Activated CD4-positive, alpha-beta T cell treated with anti-CD3 and anti-CD28 coated beads, Interleukin-2, amount 10 ng/mL, durations not matched to agents 24 days and 14 days (primary cell): ENCODE measurements at regions of chr19 and their contacts with region 1.

Region 1: DNA sequence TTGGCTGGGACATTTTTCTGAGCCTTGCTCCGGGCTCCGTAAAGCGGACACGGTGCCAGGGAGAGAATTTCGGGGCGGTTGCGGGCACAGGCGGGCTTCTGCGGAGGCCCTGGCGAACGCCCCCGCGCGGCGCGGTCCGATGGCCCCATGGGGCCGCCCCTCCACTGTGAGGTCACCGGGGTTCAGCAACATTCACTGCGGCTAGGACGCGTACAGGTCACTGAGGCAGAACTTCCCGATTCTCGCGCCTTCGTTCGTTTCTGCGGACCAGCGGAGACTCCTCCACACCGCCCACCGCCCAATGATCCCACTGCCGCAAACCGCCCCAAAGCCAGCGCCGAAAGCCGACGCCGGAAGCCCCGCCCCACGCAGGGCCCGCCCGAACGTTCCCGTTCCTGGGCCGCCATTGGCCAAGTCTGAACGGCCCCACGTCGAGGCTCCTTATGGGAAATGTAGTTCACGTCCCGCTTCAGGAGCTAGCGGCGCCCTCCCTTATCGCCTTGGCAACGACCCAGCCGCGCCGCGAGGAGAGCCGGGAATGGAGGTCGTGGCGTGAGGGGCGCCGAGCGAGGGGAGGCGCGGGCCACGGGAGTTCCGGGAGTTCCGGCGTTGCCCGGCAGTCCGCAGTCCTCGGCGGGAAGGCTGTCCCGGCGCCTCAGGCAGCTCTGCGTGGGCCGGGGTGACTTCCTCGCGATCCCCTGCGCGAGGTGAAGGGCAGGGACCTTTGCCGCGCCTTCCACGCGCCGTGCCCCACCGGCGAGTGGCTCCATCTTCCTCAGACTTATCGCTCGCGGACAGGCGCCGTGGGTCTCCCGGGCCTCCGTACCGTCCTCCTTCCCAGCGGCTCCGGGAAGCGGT is at the start of gene ZNF584:
- DNase-seq: peak; percentile 98
- H3K4me3 Mint-ChIP-seq: peak within 1 kb of the TSS; percentile 88
- H3K27ac Mint-ChIP-seq: peak within 1 kb of the TSS; percentile 92
- H3K4me1 Mint-ChIP-seq: peaks cover 32% of the 10 kb centered on the region
- H3K27me3 Mint-ChIP-seq: no peaks in the 10 kb centered on the region
- total RNA-seq, gene ZNF584: 17.4 and 17.7 TPM in 2 replicates

Region 2: DNA sequence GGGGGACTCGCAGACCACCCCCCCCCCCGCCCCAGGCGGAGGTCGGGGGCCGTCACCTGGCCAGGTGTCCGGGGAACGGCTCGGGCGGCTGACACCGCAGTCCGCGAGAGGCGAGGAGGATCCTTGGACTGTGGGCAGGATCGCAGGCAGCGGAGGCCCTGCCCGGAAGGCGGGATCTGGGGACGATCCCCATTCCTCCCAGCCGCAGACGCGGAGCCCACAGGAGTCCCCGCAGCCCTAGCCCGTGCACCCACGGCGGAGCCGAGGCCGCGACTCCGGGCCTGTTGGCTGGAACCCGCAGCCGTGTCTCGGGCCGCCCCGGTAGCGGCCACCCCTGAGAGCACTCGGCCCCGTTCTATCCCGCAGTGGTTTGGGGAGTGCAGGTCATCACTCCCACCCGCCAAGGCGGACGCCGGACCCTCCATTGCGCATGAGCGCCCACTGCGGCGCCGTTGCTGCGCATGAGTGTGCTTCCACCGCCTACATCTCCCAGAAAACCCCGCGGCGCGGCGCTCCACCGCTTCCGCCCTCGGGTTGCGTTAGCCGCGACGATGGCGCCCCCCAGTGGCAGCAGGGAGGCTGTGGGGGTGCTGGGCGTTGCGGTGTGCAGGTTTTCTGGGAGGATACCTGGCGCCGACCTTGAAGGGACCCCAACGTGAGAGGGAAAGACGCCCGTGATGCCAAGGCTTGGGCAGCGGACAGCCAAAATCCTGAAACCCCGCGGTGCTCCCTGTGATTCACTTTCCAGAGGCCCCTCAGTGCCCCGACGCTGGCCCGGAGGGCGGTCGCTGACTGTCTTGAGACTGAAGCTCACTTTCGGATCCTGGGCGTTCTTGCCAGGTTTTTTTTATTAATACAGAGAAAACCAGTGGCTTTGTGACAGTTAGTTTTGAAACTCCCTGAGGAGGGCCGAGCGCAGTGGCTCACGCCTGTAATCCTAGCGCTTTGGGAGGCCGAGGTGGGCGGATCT is 253.4 kb before region 1 on chr19:
- intact Hi-C with region 1: no loop called
- DNase-seq: peak; percentile 98
- H3K4me3 Mint-ChIP-seq: peak overlapping the region; percentile 66
- H3K27ac Mint-ChIP-seq: peak overlapping the region; percentile 69
- H3K4me1 Mint-ChIP-seq: peaks cover 6% of the 10 kb centered on the region
- H3K27me3 Mint-ChIP-seq: no peaks in the 10 kb centered on the region

Region 3: DNA sequence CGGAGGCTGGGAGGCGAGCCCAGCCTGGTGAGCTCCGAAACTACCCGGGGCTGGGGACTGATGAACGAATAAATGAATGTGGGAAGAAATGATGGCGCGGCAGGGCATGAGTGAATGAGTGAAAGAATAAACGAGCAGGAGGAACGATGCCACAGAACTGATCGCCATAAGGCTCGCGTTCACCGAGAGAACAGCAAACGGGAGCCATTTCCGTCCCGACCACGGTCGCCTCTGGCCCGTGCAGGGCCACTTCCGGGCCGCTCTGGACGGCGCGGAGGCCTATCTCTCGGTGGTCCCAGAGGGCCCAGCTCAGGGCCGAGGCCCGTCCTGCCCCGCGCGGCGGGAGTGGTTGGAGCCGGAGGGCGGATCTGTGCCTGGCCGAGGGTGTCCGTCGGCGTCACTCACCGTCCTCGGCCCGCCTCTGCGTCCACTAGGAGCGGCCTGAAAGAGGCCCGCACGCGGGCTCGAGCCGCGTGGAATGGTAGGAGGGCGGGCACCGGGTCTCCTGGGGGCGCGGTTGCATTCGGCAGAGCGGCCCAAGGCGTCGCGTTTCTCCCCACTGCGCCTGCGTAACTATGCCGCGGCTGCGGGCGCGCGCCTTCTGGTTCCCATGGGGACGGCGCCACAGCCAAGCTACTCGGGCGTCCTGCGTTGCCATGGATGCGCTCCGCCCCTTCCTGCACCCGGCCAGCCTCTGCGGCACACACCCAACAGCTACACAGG is 45.9 kb before region 1 on chr19 and contains the start of gene ZNF497:
- intact Hi-C with region 1: no loop called
- DNase-seq: peak; percentile 99
- H3K4me3 Mint-ChIP-seq: peak within 1 kb of the TSS; percentile 95
- H3K27ac Mint-ChIP-seq: peak within 1 kb of the TSS; percentile 97
- H3K4me1 Mint-ChIP-seq: peaks cover 9% of the 10 kb centered on the region
- H3K27me3 Mint-ChIP-seq: no peaks in the 10 kb centered on the region
- total RNA-seq, gene ZNF497: 0.79 and 1.1 TPM in 2 replicates

Region 4: DNA sequence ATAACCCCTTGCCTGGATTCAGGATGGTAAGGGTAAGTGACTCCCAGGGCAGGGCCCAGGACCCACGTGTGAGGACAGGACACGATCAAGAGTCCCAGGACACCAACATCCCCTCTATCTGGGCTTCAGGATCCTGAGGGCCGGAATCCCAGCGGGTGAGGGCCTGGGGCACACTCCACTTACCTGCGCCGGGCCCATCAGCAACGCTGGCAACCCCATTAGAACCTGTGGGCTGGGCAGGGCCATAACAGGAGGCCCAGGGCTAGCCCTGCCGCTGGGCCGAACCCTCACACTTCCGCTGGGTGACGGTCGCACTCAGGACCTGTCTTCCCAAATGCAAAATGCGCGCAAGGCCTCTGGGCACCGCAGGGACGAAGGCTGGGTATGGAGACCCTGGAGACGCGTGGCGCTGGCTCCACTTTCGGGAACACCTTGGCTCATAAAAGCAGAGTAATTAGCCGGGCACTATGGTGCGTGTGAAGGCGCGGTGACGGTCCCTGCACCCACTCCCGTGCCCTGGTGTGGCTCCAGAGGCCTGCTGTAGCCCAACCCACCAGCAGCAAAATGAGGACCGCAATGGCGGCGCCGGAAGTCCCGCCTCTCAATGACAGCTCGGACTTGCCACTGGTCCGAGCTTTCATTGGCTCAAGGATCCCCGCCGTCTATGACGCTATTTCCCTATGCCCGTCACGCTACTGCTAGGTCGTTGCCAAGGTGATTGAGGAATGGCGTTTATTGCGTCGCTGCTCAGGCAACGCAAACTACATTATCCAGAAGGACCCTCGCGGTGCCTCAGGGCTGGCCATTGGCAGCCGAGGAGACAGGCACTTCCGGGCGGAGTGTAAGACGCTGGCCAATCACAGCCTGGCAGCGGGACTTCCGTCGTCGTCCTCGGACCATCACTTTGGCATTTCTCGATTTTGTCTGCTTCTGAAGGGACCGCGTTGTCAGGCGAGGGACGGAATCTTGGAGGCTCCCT is 31.5 kb after region 1 on chr19 and contains the start of gene ZNF132:
- intact Hi-C with region 1: loop called (anchors 1 kb)
- DNase-seq: peak; percentile 98
- H3K4me3 Mint-ChIP-seq: peak within 1 kb of the TSS; percentile 97
- H3K27ac Mint-ChIP-seq: peak within 1 kb of the TSS; percentile 97
- H3K4me1 Mint-ChIP-seq: peaks cover 21% of the 10 kb centered on the region
- H3K27me3 Mint-ChIP-seq: no peaks in the 10 kb centered on the region
- total RNA-seq, gene ZNF132: 3.6 and 3.8 TPM in 2 replicates

Region 5: GRCh38 chr19:58499021-58499927 is 90.9 kb after region 1 on chr19:
- intact Hi-C with region 1: no loop called
- DNase-seq: peak; percentile 99
- H3K4me3 Mint-ChIP-seq: peak overlapping the region; percentile 96
- H3K27ac Mint-ChIP-seq: peak overlapping the region; percentile 99
- H3K4me1 Mint-ChIP-seq: peaks cover 25% of the 10 kb centered on the region
- H3K27me3 Mint-ChIP-seq: no peaks in the 10 kb centered on the region